PC-3 (cell line): ENCODE measurements at regions of chr3 and their contacts with region 1.

Region 1: GRCh38 chr3:119990888-119991287 is 103.4 kb downstream of the GSK3B start:
- DNase-seq: peak; percentile 37
- ATAC-seq: peak; percentile 57
- H3K4me3 ChIP-seq: no peak overlapping the region
- H3K27ac ChIP-seq: no peak overlapping the region
- H3K4me1 ChIP-seq: peaks cover 4% of the 10 kb centered on the region; the same call in 1 of the 2 replicates
- H3K27me3 ChIP-seq: no peaks in the 10 kb centered on the region
- CTCF ChIP-seq: no peak

Region 2: GRCh38 chr3:119779731-119780383 is 211.0 kb before region 1 on chr3:
- CTCF ChIA-PET with region 1: no interaction called
- POLR2A ChIA-PET with region 1: no interaction called
- intact Hi-C with region 1: no loop called
- DNase-seq: no peak
- ATAC-seq: no peak
- H3K4me3 ChIP-seq: no peak overlapping the region
- H3K27ac ChIP-seq: no peak overlapping the region
- H3K4me1 ChIP-seq: no peaks in the 10 kb centered on the region
- H3K27me3 ChIP-seq: 0 out of 2 replicates have a peak, but pooled peaks cover under 1% of the 10 kb centered on the region
- CTCF ChIP-seq: no peak

Region 3: GRCh38 chr3:120072867-120073525 is 82.1 kb after region 1 on chr3:
- CTCF ChIA-PET with region 1: interaction called, 19 read pairs
- POLR2A ChIA-PET with region 1: no interaction called
- intact Hi-C with region 1: no loop called
- DNase-seq: peak; percentile 46
- ATAC-seq: peak; percentile 63
- H3K4me3 ChIP-seq: no peak overlapping the region
- H3K27ac ChIP-seq: no peak overlapping the region
- H3K4me1 ChIP-seq: no peaks in the 10 kb centered on the region
- H3K27me3 ChIP-seq: no peaks in the 10 kb centered on the region
- CTCF ChIP-seq: peak; percentile 61

Region 4: DNA sequence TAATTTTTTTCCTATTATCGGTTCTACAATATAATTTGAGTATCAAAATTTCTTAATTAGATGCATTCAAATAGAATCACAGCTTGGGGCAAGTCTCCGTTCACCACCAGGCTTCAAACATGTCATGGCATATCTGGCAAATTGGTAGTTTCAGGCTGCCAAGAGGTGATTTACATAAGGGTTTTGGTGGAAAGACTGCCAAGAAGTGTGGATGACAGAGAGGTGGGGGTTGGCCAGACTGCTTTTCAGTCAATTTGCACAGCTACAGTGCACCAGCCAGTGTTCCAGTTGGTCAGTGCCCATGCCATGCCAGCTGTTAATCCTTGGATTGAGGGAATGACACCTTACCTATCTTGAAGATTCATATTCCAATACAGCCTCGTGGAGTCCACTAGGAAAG is 111.8 kb after region 1 on chr3:
- CTCF ChIA-PET with region 1: no interaction called
- POLR2A ChIA-PET with region 1: no interaction called
- intact Hi-C with region 1: no loop called
- DNase-seq: peak; percentile 28
- ATAC-seq: peak; percentile 57
- H3K4me3 ChIP-seq: no peak overlapping the region
- H3K27ac ChIP-seq: no peak overlapping the region
- H3K4me1 ChIP-seq: no peaks in the 10 kb centered on the region
- H3K27me3 ChIP-seq: no peaks in the 10 kb centered on the region
- CTCF ChIP-seq: no peak

Region 5: GRCh38 chr3:120364821-120365220 is 373.9 kb after region 1 on chr3:
- CTCF ChIA-PET with region 1: no interaction called
- POLR2A ChIA-PET with region 1: no interaction called
- intact Hi-C with region 1: no loop called
- DNase-seq: no peak
- ATAC-seq: no peak
- H3K4me3 ChIP-seq: no peak overlapping the region
- H3K27ac ChIP-seq: no peak overlapping the region
- H3K4me1 ChIP-seq: no peaks in the 10 kb centered on the region
- H3K27me3 ChIP-seq: peaks cover 47% of the 10 kb centered on the region
- CTCF ChIP-seq: no peak